A673 (cell line): ENCODE measurements at regions of chr5 and their contacts with region 1.

Region 1: GRCh38 chr5:138065102-138065501 is 18.7 kb upstream of the WNT8A start:
- DNase-seq: no peak
- H3K4me3 ChIP-seq: no peak overlapping the region
- H3K27ac ChIP-seq: no peak overlapping the region
- H3K4me1 ChIP-seq: no peaks in the 10 kb centered on the region
- H3K27me3 ChIP-seq: no peaks in the 10 kb centered on the region
- CTCF ChIP-seq: peak; percentile 54

Region 2: DNA sequence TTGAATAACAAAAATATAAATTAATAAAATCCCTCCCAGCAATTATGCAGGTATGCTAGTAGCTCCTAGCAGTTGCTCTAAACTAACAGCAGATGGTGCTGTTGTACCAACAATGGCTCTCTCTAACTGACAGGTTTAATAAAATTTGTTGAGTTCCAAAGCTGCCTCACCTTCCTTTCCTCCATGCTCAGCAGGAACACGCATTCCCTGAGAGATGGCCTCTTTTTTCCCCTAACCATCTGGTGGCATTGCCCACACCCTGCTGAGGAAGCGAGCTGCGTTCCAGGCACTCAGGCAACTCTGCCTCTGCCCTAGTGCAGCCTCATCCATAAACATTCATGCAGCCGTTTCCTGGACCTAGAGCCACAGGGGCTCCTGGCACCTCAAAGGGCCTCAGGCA is 435.5 kb before region 1 on chr5:
- CTCF ChIA-PET with region 1: interaction called, 8 read pairs
- POLR2A ChIA-PET with region 1: no interaction called
- intact Hi-C with region 1: loop called (anchors 2 kb)
- DNase-seq: peak; percentile 67
- H3K4me3 ChIP-seq: no peak overlapping the region
- H3K27ac ChIP-seq: no peak overlapping the region
- H3K4me1 ChIP-seq: no peaks in the 10 kb centered on the region
- H3K27me3 ChIP-seq: no peaks in the 10 kb centered on the region
- CTCF ChIP-seq: peak; percentile 87

Region 3: DNA sequence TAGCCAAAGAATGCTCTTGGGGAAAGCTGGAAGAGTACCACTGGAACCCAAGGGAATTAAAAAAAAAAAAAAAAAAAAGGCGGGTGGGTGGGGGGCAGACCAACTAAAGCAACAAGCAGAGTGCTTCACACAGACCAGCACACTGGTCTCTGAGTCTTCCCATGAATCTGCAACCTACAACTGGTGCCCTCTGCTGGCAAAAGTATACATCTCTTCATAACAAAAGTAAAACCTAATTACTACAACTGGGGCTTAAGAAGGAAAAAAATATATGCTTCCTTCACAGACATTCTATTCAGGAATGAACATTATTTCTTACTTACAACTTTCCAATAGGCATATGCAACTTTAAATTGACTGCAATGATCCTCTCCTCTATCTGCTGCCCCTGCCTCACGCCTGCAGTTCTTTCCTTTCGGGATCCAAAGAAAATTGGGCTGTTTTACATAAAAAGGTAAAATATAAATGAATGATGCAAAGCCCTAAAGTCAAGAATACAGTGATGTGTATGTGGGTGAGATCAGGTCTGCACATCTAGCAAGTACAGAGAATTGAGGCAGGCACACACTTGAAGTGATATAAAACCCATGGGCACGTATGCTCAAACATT is 322.0 kb before region 1 on chr5:
- CTCF ChIA-PET with region 1: interaction called, 10 read pairs
- POLR2A ChIA-PET with region 1: no interaction called
- intact Hi-C with region 1: no loop called
- DNase-seq: peak; percentile 87
- H3K4me3 ChIP-seq: no peak overlapping the region
- H3K27ac ChIP-seq: no peak overlapping the region
- H3K4me1 ChIP-seq: no peaks in the 10 kb centered on the region
- H3K27me3 ChIP-seq: no peaks in the 10 kb centered on the region
- CTCF ChIP-seq: peak; percentile 70

Region 4: GRCh38 chr5:137778772-137779564 is 286.1 kb before region 1 on chr5:
- CTCF ChIA-PET with region 1: interaction called, 10 read pairs
- POLR2A ChIA-PET with region 1: no interaction called
- intact Hi-C with region 1: loop called (anchors 2 kb)
- DNase-seq: peak; percentile 60
- H3K4me3 ChIP-seq: no peak overlapping the region
- H3K27ac ChIP-seq: no peak overlapping the region
- H3K4me1 ChIP-seq: no peaks in the 10 kb centered on the region
- H3K27me3 ChIP-seq: peaks cover 3% of the 10 kb centered on the region
- CTCF ChIP-seq: peak; percentile 80

Region 5: DNA sequence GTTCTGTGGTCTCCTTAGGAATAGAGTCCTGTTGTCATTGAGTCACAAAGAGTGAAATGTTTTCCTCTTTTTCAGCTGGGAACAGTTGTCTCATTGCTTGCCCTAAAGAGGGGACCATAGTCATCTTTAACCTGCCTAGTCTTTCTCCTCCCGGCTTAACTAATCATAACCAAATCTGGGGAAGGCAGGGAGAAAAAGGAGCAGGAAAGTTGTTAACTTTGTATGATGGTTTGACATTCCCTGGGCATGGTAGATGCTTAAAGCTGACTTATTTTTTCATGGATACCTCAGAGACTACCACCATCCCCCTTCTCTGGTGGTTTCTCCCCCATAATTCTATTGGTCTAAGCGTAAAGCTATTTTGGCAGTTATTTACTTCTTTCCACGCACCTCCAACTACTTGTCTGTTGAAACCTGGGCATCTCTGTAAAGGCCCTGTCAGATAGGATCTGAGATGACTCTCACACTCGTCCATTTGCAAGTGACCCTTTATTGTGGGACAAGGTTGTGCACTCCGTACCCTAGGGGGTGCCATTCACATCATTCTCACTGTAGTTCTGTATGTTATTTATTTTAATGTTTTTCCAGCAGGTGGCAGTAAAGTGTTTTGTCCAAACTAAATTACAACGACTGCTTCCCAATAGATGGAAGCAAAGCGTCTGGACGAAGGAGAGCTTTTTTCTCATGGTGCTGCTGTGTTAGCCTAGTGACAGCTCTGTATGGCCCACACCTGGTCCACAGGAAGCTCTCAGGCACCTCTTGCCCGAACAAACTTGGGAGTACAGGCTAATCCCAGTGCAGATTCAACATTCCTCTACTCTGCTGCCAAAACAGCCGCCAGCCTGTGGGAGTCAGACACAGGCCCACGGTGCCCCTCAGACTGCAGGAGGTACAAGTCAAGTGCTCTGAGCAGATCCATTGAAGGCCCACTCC is 29.2 kb before region 1 on chr5:
- CTCF ChIA-PET with region 1: interaction called, 7 read pairs
- POLR2A ChIA-PET with region 1: no interaction called
- intact Hi-C with region 1: loop called (anchors 2 kb)
- DNase-seq: peak; percentile 93
- H3K4me3 ChIP-seq: no peak overlapping the region
- H3K27ac ChIP-seq: no peak overlapping the region
- H3K4me1 ChIP-seq: peaks cover 6% of the 10 kb centered on the region
- H3K27me3 ChIP-seq: no peaks in the 10 kb centered on the region
- CTCF ChIP-seq: peak; percentile 94

Region 6: DNA sequence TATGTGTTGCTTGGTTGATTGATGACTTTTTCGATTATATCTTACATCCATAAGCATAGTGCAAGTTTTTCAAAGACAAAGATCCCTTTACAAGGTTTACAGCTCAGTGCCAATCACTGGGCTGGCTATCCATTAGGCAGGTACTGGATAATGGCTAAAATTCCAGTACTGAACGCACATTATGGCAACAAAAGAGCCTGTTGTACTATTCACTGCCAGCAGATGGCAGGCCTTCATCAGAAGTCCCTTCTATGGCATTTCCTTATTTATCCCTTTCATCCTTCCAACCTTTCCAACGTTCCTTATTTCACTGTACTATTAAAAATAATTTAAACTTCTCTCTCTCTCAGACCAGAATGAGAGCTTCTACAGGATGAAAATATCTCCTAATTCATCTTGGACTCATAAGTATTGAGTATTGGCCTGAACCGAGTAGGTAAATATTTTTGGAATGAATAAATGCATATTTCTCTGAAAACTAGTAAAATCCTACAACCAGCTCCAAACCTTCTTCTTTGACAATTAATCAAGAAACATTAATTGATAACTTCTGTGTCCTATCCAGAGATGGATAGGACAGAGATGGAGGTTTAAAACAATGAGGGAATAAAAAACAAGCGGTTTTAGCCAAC is 12.1 kb after region 1 on chr5:
- CTCF ChIA-PET with region 1: no interaction called
- POLR2A ChIA-PET with region 1: no interaction called
- intact Hi-C with region 1: no loop called
- DNase-seq: peak; percentile 74
- H3K4me3 ChIP-seq: no peak overlapping the region
- H3K27ac ChIP-seq: no peak overlapping the region
- H3K4me1 ChIP-seq: no peaks in the 10 kb centered on the region
- H3K27me3 ChIP-seq: no peaks in the 10 kb centered on the region
- CTCF ChIP-seq: peak; percentile 82